ENCODE measurements at regions of chr15 and their contacts with region 1.

Region 1: GRCh38 chr15:64046347-64047153 is at the start of gene DAPK2:
- DNase-seq: peak; percentile 62
- ATAC-seq: peak; percentile 95
- H3K4me3 Mint-ChIP-seq: peak within 1 kb of the TSS; percentile 70
- H3K27ac Mint-ChIP-seq: peak within 1 kb of the TSS; percentile 31
- H3K4me1 Mint-ChIP-seq: peaks cover 13% of the 10 kb centered on the region
- H3K27me3 Mint-ChIP-seq: peaks cover 34% of the 10 kb centered on the region
- total RNA-seq, gene DAPK2: 1.3 to 1.5 TPM

Region 2: DNA sequence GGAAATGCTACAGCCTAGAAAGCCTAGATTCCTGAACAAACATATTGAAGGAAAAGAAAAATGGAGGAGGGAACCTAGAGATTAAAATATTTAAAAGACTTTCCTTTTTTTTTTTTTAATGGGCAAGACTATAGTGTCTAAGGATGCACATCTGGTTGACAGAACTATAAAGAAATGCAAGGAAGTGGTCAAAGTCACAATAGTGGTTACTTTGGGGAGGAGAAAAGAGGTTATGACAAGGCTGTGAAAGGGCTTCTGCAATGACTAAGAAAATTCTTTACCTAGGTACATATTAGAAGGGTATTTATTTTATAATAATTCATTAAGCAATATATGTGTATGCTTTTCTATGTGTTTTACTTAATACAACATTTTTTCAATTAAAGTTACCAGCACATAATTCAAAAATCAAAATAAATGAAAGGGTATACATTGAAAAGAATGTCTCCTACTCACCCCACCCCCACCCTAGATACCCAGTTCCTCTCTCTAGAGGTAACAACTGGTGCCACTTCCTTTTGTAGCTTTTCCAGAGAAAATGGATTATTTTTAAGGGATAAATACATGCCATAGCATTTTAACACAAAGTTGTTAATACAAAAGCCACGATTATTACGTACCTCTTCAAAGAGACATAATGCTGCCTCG is 282.9 kb before region 1 on chr15:
- CTCF ChIA-PET with region 1: interaction called, 11 read pairs
- POLR2A ChIA-PET with region 1: no interaction called
- DNase-seq: peak; percentile 35
- ATAC-seq: peak; percentile 95
- H3K4me3 Mint-ChIP-seq: peak overlapping the region; percentile 61
- H3K27ac Mint-ChIP-seq: peak overlapping the region; percentile 79
- H3K4me1 Mint-ChIP-seq: peaks cover 41% of the 10 kb centered on the region
- H3K27me3 Mint-ChIP-seq: no peaks in the 10 kb centered on the region

Region 3: DNA sequence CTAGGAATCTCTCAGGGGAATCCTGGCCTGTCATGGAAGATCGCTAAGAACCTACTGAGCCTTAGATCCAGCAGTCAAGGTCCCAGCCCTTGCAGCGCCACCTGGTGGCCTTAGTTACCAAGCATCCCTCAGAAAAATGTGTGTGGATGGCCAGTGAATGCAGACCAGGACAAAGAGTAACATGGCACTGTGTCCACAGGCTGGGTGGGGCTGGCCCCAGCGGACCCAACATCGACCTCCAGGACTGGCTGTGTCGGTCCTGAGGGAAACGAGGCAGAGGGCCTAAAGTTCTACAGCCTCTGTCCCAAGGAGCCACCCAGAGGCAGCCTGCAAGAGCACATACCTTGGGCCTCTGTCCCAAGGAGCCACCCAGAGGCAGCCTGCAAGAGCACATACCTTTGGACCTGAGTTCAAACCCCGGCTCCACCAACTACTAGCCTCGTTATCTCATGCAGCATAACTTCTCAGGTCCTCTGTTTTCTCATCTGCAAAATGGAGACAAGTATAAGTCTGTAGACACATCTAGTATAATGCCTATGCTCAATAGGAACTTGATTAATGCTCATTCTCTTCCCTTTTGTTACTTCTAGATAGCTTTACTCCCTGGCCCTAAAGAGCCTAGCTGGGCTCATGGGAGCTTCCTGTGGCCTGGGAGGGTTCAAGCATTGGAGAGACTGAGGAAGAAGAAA is 155.3 kb before region 1 on chr15:
- CTCF ChIA-PET with region 1: interaction called, 25 read pairs
- POLR2A ChIA-PET with region 1: no interaction called
- DNase-seq: peak; percentile 80
- ATAC-seq: peak; percentile 28
- H3K4me3 Mint-ChIP-seq: peak overlapping the region; percentile 25
- H3K27ac Mint-ChIP-seq: peak overlapping the region; percentile 86
- H3K4me1 Mint-ChIP-seq: peaks cover 65% of the 10 kb centered on the region
- H3K27me3 Mint-ChIP-seq: no peaks in the 10 kb centered on the region

Region 4: GRCh38 chr15:64010719-64011118 is 35.8 kb before region 1 on chr15:
- CTCF ChIA-PET with region 1: interaction called, 63 read pairs
- POLR2A ChIA-PET with region 1: interaction called, 4 read pairs
- DNase-seq: peak; percentile 92
- ATAC-seq: peak; percentile 100
- H3K4me3 Mint-ChIP-seq: peak overlapping the region; percentile 7
- H3K27ac Mint-ChIP-seq: peak overlapping the region; percentile 75
- H3K4me1 Mint-ChIP-seq: peaks cover 37% of the 10 kb centered on the region
- H3K27me3 Mint-ChIP-seq: peaks cover 5% of the 10 kb centered on the region

Region 5: DNA sequence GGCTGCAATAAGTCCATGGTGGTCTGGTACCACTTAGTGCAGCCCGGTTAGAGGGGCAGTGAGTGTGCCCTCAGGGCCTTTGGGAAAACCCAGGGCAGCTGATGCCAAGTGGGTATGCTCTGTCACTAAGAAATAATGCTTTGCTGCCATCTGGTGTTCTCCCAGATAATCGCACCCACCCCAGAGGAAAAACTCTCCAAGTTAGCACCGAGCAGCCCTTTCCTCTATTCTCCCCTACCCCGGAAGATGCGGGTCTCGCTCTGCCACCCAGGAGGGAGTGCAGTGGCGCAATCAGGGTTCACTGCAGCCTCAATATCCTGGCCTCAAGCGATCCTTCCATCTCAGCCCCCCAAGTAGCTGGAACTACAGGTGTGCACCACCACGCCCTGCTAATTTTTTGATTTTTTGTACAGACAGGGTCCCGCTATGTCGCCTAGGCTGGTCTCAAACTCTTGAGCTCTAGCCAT is 21.0 kb after region 1 on chr15:
- CTCF ChIA-PET with region 1: interaction called, 40 read pairs
- POLR2A ChIA-PET with region 1: interaction called, 3 read pairs
- DNase-seq: peak; percentile 79
- ATAC-seq: peak; percentile 89
- H3K4me3 Mint-ChIP-seq: no peak overlapping the region
- H3K27ac Mint-ChIP-seq: peak overlapping the region; percentile 71
- H3K4me1 Mint-ChIP-seq: peaks cover 26% of the 10 kb centered on the region
- H3K27me3 Mint-ChIP-seq: no peaks in the 10 kb centered on the region

Region 6: DNA sequence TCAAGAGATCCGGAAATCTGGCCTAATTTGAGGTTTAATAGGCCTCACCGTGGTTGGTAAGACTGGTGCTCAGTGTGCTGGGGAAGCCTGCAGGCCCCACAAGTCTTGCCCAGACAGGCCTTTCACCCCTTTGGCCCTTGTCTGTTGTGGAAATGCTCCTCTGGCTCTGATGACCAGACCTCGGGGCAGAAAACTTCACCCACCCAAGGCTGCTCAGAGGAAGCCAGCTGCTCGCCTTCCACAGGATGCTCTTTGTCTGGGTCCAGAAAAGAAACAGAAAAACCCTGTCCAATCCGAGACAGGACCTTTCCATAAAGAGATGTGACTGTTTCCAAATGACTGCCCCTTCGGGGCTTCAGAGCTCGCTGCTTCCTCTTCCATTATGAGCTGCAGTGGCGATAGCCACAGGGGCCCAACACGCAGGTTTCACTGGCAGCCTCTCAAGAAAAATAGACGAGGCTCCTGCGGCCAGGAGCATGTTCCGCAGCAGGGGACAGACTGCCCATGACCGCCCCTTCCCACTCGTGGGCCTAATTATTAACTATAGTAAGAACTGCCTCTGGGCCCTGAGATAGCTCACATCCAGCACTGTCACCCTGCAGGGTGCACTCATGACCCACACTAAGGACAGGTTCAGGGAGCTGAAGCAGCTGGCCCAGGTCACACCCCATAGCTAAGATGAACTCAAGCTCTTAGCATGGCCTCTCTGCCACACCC is 98.2 kb after region 1 on chr15:
- CTCF ChIA-PET with region 1: no interaction called
- POLR2A ChIA-PET with region 1: no interaction called
- DNase-seq: no peak
- ATAC-seq: no peak
- H3K4me3 Mint-ChIP-seq: no peak overlapping the region
- H3K27ac Mint-ChIP-seq: no peak overlapping the region
- H3K4me1 Mint-ChIP-seq: peaks cover 5% of the 10 kb centered on the region
- H3K27me3 Mint-ChIP-seq: no peaks in the 10 kb centered on the region

Region 7: GRCh38 chr15:64216730-64217428 is 170.3 kb after region 1 on chr15:
- CTCF ChIA-PET with region 1: no interaction called
- POLR2A ChIA-PET with region 1: no interaction called
- DNase-seq: no peak
- ATAC-seq: no peak
- H3K4me3 Mint-ChIP-seq: no peak overlapping the region
- H3K27ac Mint-ChIP-seq: no peak overlapping the region
- H3K4me1 Mint-ChIP-seq: peaks cover 3% of the 10 kb centered on the region
- H3K27me3 Mint-ChIP-seq: no peaks in the 10 kb centered on the region

Measured in activated CD8-positive, alpha-beta T cell treated with anti-CD3 and anti-CD28 coated beads, Interleukin-2, amount 10 ng/mL, durations not matched to agents 7 days and 5 days (primary cell).